ENCODE measurements at regions of chr12 and their contacts with region 1.

Region 1: DNA sequence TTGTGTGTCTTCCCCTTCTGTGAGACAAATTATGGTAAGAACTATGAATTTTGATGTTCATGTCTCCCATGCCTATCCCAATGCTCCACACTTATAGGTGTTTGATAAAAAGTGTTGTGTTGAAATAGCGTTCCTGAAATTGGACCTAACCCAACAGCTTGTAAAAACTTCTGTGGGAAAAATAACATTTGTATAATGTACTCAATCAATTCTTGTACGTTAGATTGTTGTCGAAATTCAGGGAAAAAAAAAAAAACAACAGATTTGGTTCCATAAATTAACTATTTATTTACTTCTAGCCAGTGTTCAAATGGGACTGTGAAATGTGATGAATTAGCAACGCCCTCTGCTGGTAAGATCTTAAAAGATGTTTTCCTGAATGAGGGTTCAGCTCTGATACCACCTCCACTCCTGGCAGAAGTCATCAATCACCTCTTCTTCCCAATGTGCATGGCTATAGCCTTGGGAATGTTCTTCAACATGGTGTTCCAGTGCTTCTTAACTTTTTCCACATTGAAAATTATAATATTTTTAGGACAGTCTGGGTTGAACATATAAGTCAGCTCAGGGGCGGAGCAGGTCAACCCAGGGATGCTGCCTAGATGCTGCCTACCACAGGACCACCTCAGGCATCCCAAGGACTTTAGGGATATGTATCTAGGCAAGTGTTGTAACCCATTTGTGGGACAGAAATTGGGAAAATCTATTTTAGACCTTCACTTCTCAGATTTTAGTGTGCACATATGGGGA is 170.6 kb downstream of the OTOGL start:
- DNase-seq: peak; percentile 69
- ATAC-seq: peak; percentile 47
- H3K4me3 ChIP-seq: no peak overlapping the region
- H3K27ac ChIP-seq: no peak overlapping the region
- H3K4me1 ChIP-seq: peaks cover 18% of the 10 kb centered on the region
- H3K27me3 ChIP-seq: no peaks in the 10 kb centered on the region
- CTCF ChIP-seq: peak; percentile 83

Region 2: GRCh38 chr12:79373896-79374499 is 896.0 kb before region 1 on chr12:
- CTCF ChIA-PET with region 1: no interaction called
- POLR2A ChIA-PET with region 1: no interaction called
- intact Hi-C with region 1: no loop called
- DNase-seq: peak; percentile 64
- ATAC-seq: peak; percentile 92
- H3K4me3 ChIP-seq: no peak overlapping the region
- H3K27ac ChIP-seq: no peak overlapping the region
- H3K4me1 ChIP-seq: 0 out of 2 replicates have a peak, but pooled peaks cover 3% of the 10 kb centered on the region
- H3K27me3 ChIP-seq: no peaks in the 10 kb centered on the region
- CTCF ChIP-seq: peak; percentile 93

Region 3: DNA sequence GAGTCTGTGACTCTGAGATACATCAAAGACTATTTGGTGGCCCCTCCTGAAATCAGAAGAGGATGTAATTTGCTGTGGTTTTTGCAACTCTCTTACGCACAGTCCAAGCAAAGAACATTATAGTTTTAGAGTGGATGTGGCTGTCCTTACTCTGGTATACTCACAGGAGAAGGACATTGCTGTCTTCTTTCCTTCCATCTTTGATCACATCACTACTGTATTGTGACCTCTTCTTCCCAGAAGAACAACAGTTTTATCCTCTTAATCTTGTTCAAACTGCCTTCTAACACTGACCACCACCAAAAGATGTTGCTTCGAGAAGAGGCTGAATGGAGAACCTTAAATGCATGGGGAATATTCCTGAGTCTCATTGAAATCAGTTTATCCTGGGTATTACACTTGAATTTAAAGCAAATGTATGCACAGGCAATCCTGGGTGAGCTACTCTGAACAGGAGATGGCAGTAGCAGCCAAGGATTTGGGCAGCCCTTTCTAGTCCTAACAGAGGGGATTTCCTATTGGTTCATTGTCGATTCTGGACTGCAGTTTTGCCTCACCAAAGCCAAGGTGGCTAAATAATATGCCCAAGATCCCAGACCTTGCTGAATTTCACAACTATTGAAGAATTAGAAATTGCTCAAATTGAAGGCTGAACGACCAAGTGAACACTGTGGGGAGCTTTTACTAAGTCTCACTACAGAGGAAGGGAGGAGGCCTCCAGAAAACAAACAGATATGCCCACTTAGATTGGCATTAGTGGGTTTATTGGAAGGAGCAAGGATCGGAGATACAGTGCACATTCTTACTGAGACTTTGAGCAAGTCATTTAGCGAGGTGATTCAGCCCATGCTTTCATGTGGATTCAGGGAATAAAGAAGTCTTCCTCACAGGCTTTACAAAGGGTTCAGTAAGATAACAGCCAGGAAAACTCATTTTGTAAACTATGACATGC is 862.0 kb before region 1 on chr12:
- CTCF ChIA-PET with region 1: interaction called, 4 read pairs
- POLR2A ChIA-PET with region 1: no interaction called
- intact Hi-C with region 1: loop called (anchors 2 kb)
- DNase-seq: peak; percentile 94
- ATAC-seq: peak; percentile 99
- H3K4me3 ChIP-seq: peak overlapping the region; percentile 24; the same call in 1 of the 2 replicates
- H3K27ac ChIP-seq: peak overlapping the region; percentile 33
- H3K4me1 ChIP-seq: peaks cover 23% of the 10 kb centered on the region
- H3K27me3 ChIP-seq: no peaks in the 10 kb centered on the region
- CTCF ChIP-seq: peak; percentile 97

Region 4: DNA sequence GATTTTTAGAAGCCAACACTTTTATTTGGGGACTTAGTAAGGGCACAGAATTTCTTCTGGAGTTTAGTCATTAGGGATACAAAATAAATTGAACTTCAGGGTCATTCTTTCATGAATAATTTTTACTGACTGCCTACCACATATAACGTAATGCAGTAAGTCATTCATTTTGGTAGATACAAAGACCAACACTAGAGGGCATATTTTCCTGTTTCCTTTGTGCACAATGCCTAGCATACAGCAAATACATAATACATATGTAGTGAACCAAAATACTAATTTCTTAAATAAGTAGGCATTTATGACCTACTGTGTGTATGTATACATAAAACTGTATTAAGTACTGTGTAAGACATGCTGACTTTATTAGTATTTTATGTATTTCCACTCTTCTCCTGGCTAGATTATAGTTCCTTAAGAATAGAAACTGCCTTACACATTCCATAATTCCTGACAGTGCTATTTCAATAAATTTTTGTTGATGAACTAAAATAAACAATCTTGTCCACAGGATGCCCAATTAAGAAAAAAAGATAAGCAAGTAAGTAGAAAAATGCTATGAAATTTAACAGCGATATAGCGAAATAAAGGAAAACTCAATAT is 383.0 kb before region 1 on chr12:
- CTCF ChIA-PET with region 1: no interaction called
- POLR2A ChIA-PET with region 1: no interaction called
- intact Hi-C with region 1: loop called (anchors 5 kb)
- DNase-seq: peak; percentile 84
- ATAC-seq: peak; percentile 78
- H3K4me3 ChIP-seq: no peak overlapping the region
- H3K27ac ChIP-seq: no peak overlapping the region
- H3K4me1 ChIP-seq: peaks cover 12% of the 10 kb centered on the region
- H3K27me3 ChIP-seq: no peaks in the 10 kb centered on the region
- CTCF ChIP-seq: peak; percentile 87

Region 5: DNA sequence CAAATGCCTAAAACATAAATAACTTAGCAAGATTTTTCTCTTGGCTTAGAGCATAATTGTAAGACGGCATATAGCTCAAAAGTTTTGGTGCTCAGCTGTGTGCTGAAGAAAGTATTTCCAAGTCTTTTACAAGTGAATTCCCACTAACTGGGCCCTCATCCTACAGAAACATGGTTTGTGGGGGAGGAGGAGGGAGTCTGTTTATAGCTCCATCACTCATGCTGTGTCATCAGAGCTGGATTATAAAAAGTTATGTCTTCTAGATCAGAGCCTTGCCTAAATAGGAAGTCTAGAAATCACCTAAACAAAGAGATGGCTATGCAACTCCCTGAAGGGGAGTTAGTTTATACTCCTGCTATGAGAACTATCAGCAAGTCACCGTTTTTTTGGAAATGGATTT is 236.5 kb before region 1 on chr12:
- CTCF ChIA-PET with region 1: no interaction called
- POLR2A ChIA-PET with region 1: no interaction called
- intact Hi-C with region 1: loop called (anchors 10 kb)
- DNase-seq: peak; percentile 89
- ATAC-seq: peak; percentile 95
- H3K4me3 ChIP-seq: no peak overlapping the region
- H3K27ac ChIP-seq: peak overlapping the region; percentile 42
- H3K4me1 ChIP-seq: peaks cover 16% of the 10 kb centered on the region
- H3K27me3 ChIP-seq: no peaks in the 10 kb centered on the region
- CTCF ChIP-seq: no peak

Region 6: GRCh38 chr12:80195074-80195726 is 74.8 kb before region 1 on chr12:
- CTCF ChIA-PET with region 1: interaction called, 50 read pairs
- POLR2A ChIA-PET with region 1: no interaction called
- intact Hi-C with region 1: loop called (anchors 1 kb)
- DNase-seq: peak; percentile 71
- ATAC-seq: peak; percentile 78
- H3K4me3 ChIP-seq: no peak overlapping the region
- H3K27ac ChIP-seq: no peak overlapping the region
- H3K4me1 ChIP-seq: no peaks in the 10 kb centered on the region
- H3K27me3 ChIP-seq: no peaks in the 10 kb centered on the region
- CTCF ChIP-seq: peak; percentile 79

Region 7: GRCh38 chr12:80234667-80235066 is 35.3 kb before region 1 on chr12:
- CTCF ChIA-PET with region 1: no interaction called
- POLR2A ChIA-PET with region 1: no interaction called
- intact Hi-C with region 1: no loop called
- DNase-seq: no peak
- ATAC-seq: no peak
- H3K4me3 ChIP-seq: no peak overlapping the region
- H3K27ac ChIP-seq: no peak overlapping the region
- H3K4me1 ChIP-seq: no peaks in the 10 kb centered on the region
- H3K27me3 ChIP-seq: no peaks in the 10 kb centered on the region
- CTCF ChIP-seq: no peak

Region 8: DNA sequence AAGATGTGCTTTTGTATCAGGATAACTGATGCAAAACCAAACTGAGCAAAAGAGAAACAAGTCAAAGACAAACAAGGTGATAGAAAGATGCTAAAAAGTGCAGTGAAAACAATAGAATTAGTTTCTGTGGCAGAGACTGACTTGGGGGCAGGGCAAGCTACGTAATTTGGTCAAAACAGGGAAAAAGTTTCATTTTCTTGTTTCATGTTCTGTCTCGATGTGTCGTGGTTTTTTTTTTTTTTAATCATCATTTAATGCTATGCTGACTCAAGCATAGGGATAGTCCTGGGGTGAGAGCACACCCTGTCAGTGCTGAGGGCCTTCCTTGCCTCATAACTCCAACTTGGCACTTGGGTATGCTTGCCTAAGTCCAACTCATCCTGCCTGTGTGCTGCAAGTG is 30.0 kb after region 1 on chr12:
- CTCF ChIA-PET with region 1: no interaction called
- POLR2A ChIA-PET with region 1: no interaction called
- intact Hi-C with region 1: no loop called
- DNase-seq: no peak
- ATAC-seq: no peak
- H3K4me3 ChIP-seq: no peak overlapping the region
- H3K27ac ChIP-seq: no peak overlapping the region
- H3K4me1 ChIP-seq: no peaks in the 10 kb centered on the region
- H3K27me3 ChIP-seq: no peaks in the 10 kb centered on the region
- CTCF ChIP-seq: no peak

Measured in PC-3 (cell line).